A673 (cell line): ENCODE measurements at regions of chr2 and their contacts with region 1.

Region 1: DNA sequence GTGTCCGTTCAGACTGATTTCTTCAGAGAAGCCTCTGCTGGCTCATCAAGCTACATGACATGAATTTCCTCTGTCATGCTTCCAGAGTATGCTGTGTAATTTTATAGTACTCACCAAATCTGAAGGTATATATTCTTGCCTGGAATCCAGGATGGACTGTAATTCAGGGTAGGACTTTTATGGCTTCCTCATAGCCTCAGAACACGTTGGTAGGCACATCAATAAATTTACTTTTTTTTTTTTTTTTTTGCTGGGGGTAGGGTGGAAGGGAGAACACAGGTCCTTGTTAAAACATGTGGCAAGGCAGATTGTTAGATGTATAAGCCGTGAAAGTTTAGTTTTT is 34.4 kb downstream of the MTA3 start:
- DNase-seq: no peak
- H3K4me3 ChIP-seq: no peak overlapping the region
- H3K27ac ChIP-seq: no peak overlapping the region
- H3K4me1 ChIP-seq: peaks cover 18% of the 10 kb centered on the region
- H3K27me3 ChIP-seq: no peaks in the 10 kb centered on the region
- CTCF ChIP-seq: no peak

Region 2: GRCh38 chr2:41410011-41410410 is 1192.8 kb before region 1 on chr2:
- CTCF ChIA-PET with region 1: no interaction called
- POLR2A ChIA-PET with region 1: no interaction called
- intact Hi-C with region 1: no loop called
- DNase-seq: peak; percentile 14
- H3K4me3 ChIP-seq: no peak overlapping the region
- H3K27ac ChIP-seq: no peak overlapping the region
- H3K4me1 ChIP-seq: no peaks in the 10 kb centered on the region
- H3K27me3 ChIP-seq: peaks cover 21% of the 10 kb centered on the region
- CTCF ChIP-seq: 0 out of 2 replicates have a peak, but pooled peaks have one; percentile 23

Region 3: GRCh38 chr2:42590176-42590575 is 12.7 kb before region 1 on chr2:
- CTCF ChIA-PET with region 1: no interaction called
- POLR2A ChIA-PET with region 1: interaction called, 17 read pairs
- intact Hi-C with region 1: no loop called
- DNase-seq: no peak
- H3K4me3 ChIP-seq: no peak overlapping the region
- H3K27ac ChIP-seq: no peak overlapping the region
- H3K4me1 ChIP-seq: no peaks in the 10 kb centered on the region
- H3K27me3 ChIP-seq: no peaks in the 10 kb centered on the region
- CTCF ChIP-seq: no peak

Region 4: GRCh38 chr2:43848214-43848613 is 1245.4 kb after region 1 on chr2:
- CTCF ChIA-PET with region 1: no interaction called
- POLR2A ChIA-PET with region 1: no interaction called
- intact Hi-C with region 1: no loop called
- DNase-seq: no peak
- H3K4me3 ChIP-seq: no peak overlapping the region
- H3K27ac ChIP-seq: no peak overlapping the region
- H3K4me1 ChIP-seq: no peaks in the 10 kb centered on the region
- H3K27me3 ChIP-seq: peaks cover 6% of the 10 kb centered on the region
- CTCF ChIP-seq: no peak